ENCODE measurements at regions of chr12 and their contacts with region 1.

Region 1: DNA sequence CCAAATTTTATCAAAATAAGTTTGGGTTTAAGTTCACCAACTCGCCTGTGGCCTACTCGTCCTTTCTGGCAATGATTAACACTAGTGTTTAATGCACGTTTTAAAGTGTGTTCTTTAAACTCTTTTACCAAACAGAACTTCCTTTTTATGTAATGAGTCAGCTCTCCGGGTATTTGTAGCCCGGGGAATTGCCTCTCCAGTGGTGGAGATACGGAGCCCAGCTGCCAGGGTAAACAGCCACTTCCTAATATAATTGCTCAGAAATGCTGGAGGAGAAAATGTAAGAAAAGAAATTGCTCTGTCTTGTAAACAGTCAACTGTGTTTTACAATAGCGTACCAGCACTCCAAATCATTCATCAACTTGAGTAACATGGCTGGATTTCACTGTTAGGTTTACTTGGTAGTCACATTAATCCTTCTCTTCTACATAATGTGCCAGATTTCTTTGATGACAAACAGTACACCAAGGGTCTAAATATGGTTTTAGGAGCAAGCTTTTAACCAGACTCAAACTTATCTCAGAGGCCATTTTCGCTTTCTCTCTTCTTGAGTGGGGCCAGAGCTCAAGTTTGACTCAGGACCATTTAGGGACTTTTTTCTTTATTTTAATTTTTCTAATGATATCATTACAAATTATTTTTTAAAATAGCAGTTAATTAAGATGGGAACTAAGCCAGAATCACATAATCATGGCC is 101.2 kb upstream of the SLC38A2 start:
- DNase-seq: peak; percentile 80
- ATAC-seq: peak; percentile 90 to 96

Region 2: DNA sequence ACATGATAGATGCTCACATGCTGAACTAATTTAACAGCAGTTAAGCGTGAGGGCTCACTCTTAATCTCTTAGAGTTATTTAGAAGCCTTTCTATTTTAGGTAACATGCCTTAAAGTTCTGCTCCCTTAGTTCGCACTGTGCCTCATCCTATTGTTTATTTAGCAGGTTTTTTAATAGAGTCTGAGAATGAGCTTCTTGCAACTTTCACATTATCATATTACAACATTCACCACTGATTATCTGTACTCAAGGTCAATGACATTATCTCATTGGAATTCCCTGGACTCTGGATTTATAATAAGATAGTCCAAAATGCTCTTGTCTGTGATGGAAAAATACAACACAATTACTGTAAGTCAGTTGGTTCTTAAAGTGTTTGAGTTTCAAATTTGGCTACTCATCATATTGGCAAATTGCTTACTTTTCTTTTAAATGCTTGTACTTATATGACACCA is 82.3 kb after region 1 on chr12:
- intact Hi-C with region 1: loop called in 1 of 2 experiments (anchors 5 kb)
- DNase-seq: no peak
- ATAC-seq: peak; percentile 82 to 87